Heart right ventricle (tissue), 16 donors: ENCODE measurements at regions of chr2 and their contacts with region 1.

Region 1: DNA sequence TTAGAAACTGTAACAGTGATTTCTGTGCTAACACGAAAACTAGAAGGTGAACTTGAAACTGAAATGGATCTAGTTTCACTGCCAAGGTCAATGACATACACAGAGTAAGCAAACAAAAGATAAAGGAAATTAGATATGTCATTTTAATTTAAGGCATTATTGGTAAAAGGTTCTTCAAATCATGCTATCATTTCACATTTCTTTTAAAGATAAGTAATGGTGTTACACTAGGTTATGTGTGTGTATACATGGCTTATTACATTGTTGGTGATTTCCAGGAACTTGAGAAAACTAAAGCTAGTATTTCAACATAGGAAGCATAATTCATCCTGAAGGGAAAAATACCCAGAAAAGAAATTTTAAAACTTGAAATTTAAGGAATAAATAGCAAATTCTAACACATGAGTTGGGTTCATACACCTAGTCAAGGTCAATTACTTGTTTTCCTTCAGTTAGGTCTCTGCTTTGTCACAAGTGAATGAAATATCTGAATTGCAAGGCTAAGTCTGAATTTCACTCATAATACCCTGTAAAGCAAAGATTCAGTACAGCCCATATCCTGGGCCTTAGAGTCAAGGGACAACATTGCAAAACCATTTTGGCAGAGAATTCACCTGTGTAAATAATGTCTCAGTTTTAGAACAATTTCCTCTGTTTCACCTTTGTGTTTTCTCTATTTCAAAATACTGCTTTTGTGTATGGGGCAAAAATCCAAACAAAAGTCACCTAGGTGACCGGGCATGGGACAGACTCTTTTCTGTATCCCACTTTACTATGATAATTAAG is 141.6 kb downstream of the SRBD1 start:
- DNase-seq: no peak
- ATAC-seq: peak in 1 of 8 donors; percentile 58
- H3K4me3 ChIP-seq: no peak overlapping the region
- H3K27ac ChIP-seq: peak overlapping the region in 2 of 10 donors; percentile 16 to 49
- H3K4me1 ChIP-seq: peaks cover 0 to 25% (median 15%) of the 10 kb centered on the region in 9 donors
- H3K27me3 ChIP-seq: no peaks in the 10 kb centered on the region
- CTCF ChIP-seq: no peak

Region 2: GRCh38 chr2:45422921-45423320 is 46.6 kb before region 1 on chr2:
- intact Hi-C with region 1: loop called in 1 of 10 experiments (anchors 10 kb)
- DNase-seq: no peak
- ATAC-seq: no peak
- H3K4me3 ChIP-seq: no peak overlapping the region
- H3K27ac ChIP-seq: no peak overlapping the region
- H3K4me1 ChIP-seq: no peaks in the 10 kb centered on the region
- H3K27me3 ChIP-seq: no peaks in the 10 kb centered on the region
- CTCF ChIP-seq: no peak

Region 3: GRCh38 chr2:45606796-45607195 is 137.3 kb after region 1 on chr2:
- intact Hi-C with region 1: no loop called
- DNase-seq: no peak
- ATAC-seq: no peak
- H3K4me3 ChIP-seq: no peak overlapping the region
- H3K27ac ChIP-seq: peak overlapping the region in 1 of 10 donors; percentile 5
- H3K4me1 ChIP-seq: peaks cover 3 to 20% (median 12%) of the 10 kb centered on the region in 9 donors
- H3K27me3 ChIP-seq: no peaks in the 10 kb centered on the region
- CTCF ChIP-seq: no peak